Naive thymus-derived CD4-positive, alpha-beta T cell (primary cell): ENCODE measurements at regions of chr12 and their contacts with region 1.

Region 1: DNA sequence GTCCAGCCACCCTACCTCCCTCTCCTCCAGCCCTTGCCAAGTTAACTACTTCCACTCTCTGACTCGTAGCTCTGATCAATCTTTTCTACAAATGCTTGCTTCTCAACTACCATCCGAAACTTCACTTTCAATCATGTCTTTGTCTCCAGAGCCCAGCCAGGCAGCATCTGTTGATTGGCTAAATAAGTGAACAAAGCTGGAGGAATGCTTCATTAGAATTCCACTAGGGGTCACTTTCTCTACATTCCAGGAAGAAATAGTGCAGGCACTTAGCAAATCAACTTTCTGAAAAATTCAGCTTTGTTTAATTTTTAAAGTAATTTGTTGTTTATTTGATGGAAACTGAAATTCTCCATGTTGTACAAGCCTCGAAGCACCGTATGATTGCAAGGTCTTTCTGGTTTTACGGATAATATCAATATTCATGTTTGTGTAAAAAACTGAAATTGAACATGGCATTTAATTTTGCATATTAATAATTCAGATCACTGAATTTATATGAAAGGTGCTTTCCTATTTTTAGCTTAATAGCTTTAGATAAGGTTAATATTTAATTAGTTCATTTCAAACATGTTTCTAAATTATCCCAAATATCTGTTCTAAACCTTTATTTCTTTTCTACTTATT is 32.4 kb upstream of the HELB start:
- DNase-seq: peak in 7 of 9 donors; percentile 20 to 62 (median 52)
- ATAC-seq: peak; percentile 72
- H3K4me3 ChIP-seq: no peak overlapping the region
- H3K4me3 Mint-ChIP-seq: no peak overlapping the region
- H3K27ac ChIP-seq: no peak overlapping the region
- H3K27ac Mint-ChIP-seq: peak overlapping the region in 1 of 9 donors; percentile 55
- H3K4me1 ChIP-seq: peaks cover 0 to 13% of the 10 kb centered on the region in 2 donors
- H3K4me1 Mint-ChIP-seq: peaks cover 6 to 22% (median 9%) of the 10 kb centered on the region in 7 donors
- H3K27me3 ChIP-seq: no peaks in the 10 kb centered on the region
- H3K27me3 Mint-ChIP-seq: no peaks in the 10 kb centered on the region

Region 2: GRCh38 chr12:66693901-66694675 is 424.2 kb after region 1 on chr12:
- CTCF ChIA-PET with region 1: interaction called, 22 read pairs
- POLR2A ChIA-PET with region 1: no interaction called
- intact Hi-C with region 1: loop called (anchors 1 to 2 kb)
- DNase-seq: peak in 7 of 9 donors; percentile 25 to 57 (median 50)
- ATAC-seq: peak; percentile 89
- H3K4me3 ChIP-seq: no peak overlapping the region
- H3K4me3 Mint-ChIP-seq: no peak overlapping the region
- H3K27ac ChIP-seq: no peak overlapping the region
- H3K27ac Mint-ChIP-seq: no peak overlapping the region
- H3K4me1 ChIP-seq: no peaks in the 10 kb centered on the region
- H3K4me1 Mint-ChIP-seq: peaks cover 3 to 24% (median 18%) of the 10 kb centered on the region in 7 donors
- H3K27me3 ChIP-seq: no peaks in the 10 kb centered on the region
- H3K27me3 Mint-ChIP-seq: peaks cover 0 to 8% (median 0%) of the 10 kb centered on the region in 5 donors